ENCODE measurements at regions of chr10 and their contacts with region 1.

Region 1: DNA sequence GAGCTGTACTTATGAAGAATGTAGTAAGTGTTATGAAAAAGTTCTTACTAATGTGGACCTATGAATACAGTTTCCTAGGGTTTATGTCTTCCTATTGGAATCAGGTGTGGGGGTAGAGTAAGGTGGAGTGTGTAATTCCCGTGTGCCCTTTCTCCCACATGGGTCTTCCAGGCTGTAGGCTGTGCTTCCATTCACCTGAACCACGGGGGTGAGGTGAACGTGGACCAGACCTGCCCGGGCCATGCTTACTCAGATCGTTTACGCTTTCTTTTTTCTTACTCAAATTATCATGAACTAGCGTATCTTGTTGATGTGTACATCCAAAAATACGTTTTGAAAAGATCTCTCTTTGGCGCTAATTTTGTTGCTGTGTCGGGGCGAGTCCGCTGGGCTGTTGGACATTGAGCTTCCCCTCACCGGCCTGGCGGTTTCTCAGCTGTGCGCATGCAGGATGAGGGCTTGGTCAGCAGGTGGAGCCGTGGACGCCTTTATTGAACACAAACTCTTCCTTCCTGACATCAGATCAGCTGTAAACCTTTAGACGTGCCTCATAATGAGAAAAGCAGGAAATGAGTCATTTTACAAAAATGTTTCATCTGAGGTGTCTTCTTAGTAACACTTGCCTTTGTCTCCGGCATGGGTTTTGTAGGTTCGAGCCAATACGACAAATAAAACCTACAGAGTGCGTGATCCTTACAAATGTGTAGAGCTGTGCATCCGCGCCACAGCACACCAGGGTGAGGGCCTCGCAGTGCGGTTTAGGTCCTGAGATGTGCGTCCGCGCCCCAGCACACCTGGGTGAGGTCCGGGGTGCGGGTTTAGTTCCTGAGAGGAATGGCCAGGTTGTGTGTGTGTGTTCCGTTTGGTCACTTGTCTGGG is 53.8 kb downstream of the WDR37 start:
- DNase-seq: peak; percentile 89
- H3K4me3 Mint-ChIP-seq: peak overlapping the region; percentile 10
- H3K27ac Mint-ChIP-seq: peak overlapping the region; percentile 77
- H3K4me1 Mint-ChIP-seq: peaks cover 24% of the 10 kb centered on the region
- H3K27me3 Mint-ChIP-seq: no peaks in the 10 kb centered on the region

Region 2: GRCh38 chr10:1061930-1062774 is 47.9 kb before region 1 on chr10:
- CTCF ChIA-PET with region 1: interaction called, 3 read pairs
- POLR2A ChIA-PET with region 1: no interaction called
- intact Hi-C with region 1: loop called (anchors 5 kb)
- DNase-seq: no peak
- H3K4me3 Mint-ChIP-seq: peak overlapping the region; percentile 7
- H3K27ac Mint-ChIP-seq: peak overlapping the region; percentile 74
- H3K4me1 Mint-ChIP-seq: peaks cover 73% of the 10 kb centered on the region
- H3K27me3 Mint-ChIP-seq: no peaks in the 10 kb centered on the region

Region 3: DNA sequence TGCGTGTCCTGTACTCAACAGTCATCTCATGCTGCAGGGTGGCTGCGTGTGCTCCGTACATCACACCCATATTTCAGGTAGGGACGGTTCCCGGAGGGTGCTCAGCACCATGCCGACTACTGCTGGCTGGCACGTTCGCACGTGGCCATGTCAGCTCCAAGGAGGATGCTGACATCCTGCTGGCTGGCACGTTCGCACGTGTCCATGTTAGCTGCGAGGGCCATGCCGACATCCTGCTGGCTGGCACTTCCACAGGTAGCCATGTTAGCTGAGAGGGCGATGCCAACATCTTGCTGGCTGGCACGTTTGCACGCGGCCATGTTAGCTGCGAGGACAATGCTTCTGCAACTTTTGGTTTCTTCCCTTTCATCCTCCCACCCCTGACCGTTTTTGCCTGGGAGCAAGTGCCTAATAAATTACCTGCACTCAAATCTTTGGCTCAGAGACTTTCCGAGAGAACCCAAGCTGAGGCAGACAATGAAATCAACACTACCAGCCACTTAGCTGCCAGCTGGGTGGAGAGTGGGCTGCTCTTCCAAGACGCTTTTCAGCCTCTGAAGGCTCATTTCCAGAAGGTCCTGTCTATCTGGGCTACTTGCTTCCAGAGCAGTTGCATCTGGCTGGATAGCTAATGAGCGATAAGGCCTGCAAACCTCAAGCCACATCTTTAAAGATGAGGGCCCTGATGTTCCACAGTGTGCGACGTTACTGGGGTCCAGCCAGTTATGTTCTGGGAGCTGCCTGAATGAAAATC is 50.7 kb after region 1 on chr10:
- CTCF ChIA-PET with region 1: no interaction called
- POLR2A ChIA-PET with region 1: no interaction called
- intact Hi-C with region 1: no loop called
- DNase-seq: no peak
- H3K4me3 Mint-ChIP-seq: no peak overlapping the region
- H3K27ac Mint-ChIP-seq: no peak overlapping the region
- H3K4me1 Mint-ChIP-seq: no peaks in the 10 kb centered on the region
- H3K27me3 Mint-ChIP-seq: peaks cover 4% of the 10 kb centered on the region

Region 4: DNA sequence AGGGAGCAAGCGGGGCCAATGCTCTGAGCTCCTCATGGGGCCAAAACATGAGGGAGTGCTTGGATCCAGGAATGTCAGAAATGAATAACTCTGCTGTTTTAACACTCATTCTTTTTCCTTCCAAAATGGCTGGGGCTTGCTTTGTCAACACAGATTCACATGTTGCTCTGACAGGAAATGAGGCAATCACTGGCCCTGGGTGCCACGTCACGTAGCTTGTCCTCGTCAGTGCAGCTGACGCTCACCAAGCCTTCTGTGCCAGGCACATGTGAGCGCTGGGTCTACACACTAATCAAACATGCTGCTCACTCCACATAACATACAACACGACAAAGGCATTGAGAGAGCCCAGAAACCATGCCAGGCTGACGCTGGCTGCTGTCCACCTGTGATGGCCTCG is 145.1 kb after region 1 on chr10:
- CTCF ChIA-PET with region 1: no interaction called
- POLR2A ChIA-PET with region 1: no interaction called
- intact Hi-C with region 1: loop called (anchors 10 kb)
- DNase-seq: peak; percentile 56
- H3K4me3 Mint-ChIP-seq: no peak overlapping the region
- H3K27ac Mint-ChIP-seq: no peak overlapping the region
- H3K4me1 Mint-ChIP-seq: peaks cover 40% of the 10 kb centered on the region
- H3K27me3 Mint-ChIP-seq: peaks cover 64% of the 10 kb centered on the region

Region 5: GRCh38 chr10:1360011-1360557 is 250.1 kb after region 1 on chr10:
- CTCF ChIA-PET with region 1: no interaction called
- POLR2A ChIA-PET with region 1: interaction called, 5 read pairs
- intact Hi-C with region 1: loop called (anchors 10 kb)
- DNase-seq: peak; percentile 19
- H3K4me3 Mint-ChIP-seq: no peak overlapping the region
- H3K27ac Mint-ChIP-seq: no peak overlapping the region
- H3K4me1 Mint-ChIP-seq: peaks cover 15% of the 10 kb centered on the region
- H3K27me3 Mint-ChIP-seq: peaks cover 11% of the 10 kb centered on the region

Region 6: DNA sequence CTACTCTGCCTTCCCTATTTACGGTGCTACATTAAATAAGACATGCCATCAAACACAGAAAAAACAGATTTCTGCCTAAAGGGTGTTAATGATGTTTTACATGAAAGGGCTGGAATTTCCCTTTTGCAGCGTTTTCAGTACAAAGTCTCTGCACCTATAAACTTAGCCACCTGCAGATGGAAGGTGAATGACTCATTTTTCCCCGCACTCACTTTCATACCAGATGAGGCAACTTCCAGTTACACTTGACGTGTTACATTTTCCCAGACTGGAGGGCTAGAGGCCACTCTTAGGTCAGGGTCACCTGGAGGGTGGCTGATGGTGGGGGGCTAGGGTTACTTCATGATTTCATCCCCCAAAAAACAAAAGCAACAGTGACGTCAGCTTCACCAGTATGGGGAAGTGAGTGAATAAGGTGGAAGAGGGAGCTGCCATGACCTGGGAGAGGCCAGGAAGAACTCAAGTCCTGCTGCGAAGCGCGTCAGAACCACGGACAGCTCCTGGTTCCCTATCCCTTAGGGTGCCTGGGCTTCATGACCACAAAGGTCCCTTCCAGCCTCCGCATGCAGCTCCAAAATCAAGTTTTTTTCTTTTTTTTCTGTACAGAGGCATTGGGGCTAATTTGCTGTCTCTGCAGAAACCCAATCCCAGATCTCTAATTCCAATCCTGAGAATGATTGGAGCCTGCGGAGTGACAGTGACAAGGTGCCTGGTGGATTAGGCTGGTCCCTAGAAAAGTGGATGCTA is 533.3 kb after region 1 on chr10:
- CTCF ChIA-PET with region 1: no interaction called
- POLR2A ChIA-PET with region 1: no interaction called
- intact Hi-C with region 1: loop called (anchors 2 kb)
- DNase-seq: peak; percentile 56
- H3K4me3 Mint-ChIP-seq: no peak overlapping the region
- H3K27ac Mint-ChIP-seq: peak overlapping the region; percentile 81
- H3K4me1 Mint-ChIP-seq: peaks cover 13% of the 10 kb centered on the region
- H3K27me3 Mint-ChIP-seq: peaks cover 14% of the 10 kb centered on the region